ENCODE measurements at regions of chr21 and their contacts with region 1.

Region 1: DNA sequence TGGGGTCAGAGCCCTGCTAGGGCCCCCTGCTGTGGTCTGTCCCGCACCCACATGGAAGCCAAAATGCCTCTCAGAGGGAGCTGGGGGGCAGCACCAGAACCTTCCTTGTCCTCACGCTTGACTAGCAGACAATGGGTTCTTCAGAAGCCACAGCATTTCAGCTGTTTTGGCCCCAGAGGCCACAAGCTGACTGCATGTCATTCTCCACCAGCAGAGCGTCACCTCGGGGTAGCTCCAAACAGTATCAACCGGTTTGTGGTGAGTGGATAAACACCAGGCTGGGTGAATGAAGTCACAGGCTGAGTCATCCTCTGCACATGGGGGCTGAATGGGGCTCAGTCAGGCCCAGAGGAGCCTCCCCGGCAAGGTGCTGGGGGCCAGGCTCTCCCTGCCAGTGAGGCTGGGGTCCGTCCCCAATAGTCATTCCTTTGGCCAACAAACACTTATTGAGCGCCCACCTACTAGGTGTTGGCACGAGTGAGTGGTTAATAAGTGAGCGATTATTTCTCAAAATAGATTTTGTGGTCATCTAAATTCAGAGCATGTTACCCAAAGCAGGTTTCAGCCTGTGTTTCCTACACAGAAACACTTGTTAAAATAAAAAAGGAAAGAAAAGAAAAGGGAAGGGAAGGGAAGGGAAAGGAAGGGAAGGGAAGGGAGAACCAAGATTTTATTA is 9.1 kb downstream of the OLIG1 start:
- DNase-seq: peak; percentile 9 to 94 (median 88)
- H3K4me3 ChIP-seq: peak overlapping the region in 2 of 59 donors; percentile 0 to 25
- H3K27ac ChIP-seq: peak overlapping the region; percentile 11 to 98 (median 89)
- H3K27me3 ChIP-seq: peaks cover 0 to 21% (median 0%) of the 10 kb centered on the region in 45 donors
- CTCF ChIP-seq: peak in 49 of 56 donors; percentile 18 to 67 (median 45)

Region 2: DNA sequence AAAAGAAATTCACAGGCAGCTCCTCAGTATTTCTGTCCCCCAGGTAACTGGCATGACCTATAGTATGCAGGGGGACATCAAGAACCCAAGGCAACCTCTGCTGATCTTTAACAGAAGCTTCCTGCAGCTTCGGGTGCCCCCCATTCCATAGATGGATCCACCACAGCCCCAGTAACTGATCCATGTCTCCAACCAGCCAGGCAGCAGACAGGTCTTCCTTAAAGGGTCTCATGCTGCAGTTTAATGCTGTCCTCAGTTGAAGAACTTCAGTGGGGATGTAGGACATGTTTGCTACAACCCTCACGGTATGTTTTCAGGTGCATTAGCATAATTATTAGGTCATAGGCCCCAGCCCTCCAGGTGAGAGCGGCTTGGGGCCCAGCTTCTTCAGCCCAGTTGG is 144.2 kb before region 1 on chr21:
- intact Hi-C with region 1: loop called in 1 of 2 experiments (anchors 5 kb)
- DNase-seq: no peak
- H3K4me3 ChIP-seq: no peak overlapping the region
- H3K27ac ChIP-seq: no peak overlapping the region
- H3K27me3 ChIP-seq: peaks cover 0 to 7% (median 0%) of the 10 kb centered on the region in 45 donors
- CTCF ChIP-seq: no peak

Region 3: GRCh38 chr21:33115631-33116510 is 36.8 kb after region 1 on chr21:
- intact Hi-C with region 1: loop called (anchors 1 kb)
- DNase-seq: peak; percentile 73 to 91 (median 81)
- H3K4me3 ChIP-seq: peak overlapping the region in 22 of 59 donors; percentile 3 to 42 (median 18)
- H3K27ac ChIP-seq: peak overlapping the region; percentile 50 to 98 (median 92)
- H3K27me3 ChIP-seq: peaks cover 0 to 25% (median 5%) of the 10 kb centered on the region in 45 donors
- CTCF ChIP-seq: peak in 2 of 56 donors; percentile 11 to 15

Measured in dorsolateral prefrontal cortex (tissue), 120 donors.